Endothelial cell of umbilical vein (primary cell): ENCODE measurements at regions of chr14 and their contacts with region 1.

Region 1: GRCh38 chr14:92846162-92846897 is 52.2 kb downstream of the GOLGA5 start:
- DNase-seq: peak; percentile 73
- H3K4me3 ChIP-seq: no peak overlapping the region
- H3K27ac ChIP-seq: no peak overlapping the region
- H3K4me1 ChIP-seq: peaks cover 19% of the 10 kb centered on the region
- H3K27me3 ChIP-seq: no peaks in the 10 kb centered on the region
- CTCF ChIP-seq: no peak
- POLR2A ChIP-seq: no peak

Region 2: DNA sequence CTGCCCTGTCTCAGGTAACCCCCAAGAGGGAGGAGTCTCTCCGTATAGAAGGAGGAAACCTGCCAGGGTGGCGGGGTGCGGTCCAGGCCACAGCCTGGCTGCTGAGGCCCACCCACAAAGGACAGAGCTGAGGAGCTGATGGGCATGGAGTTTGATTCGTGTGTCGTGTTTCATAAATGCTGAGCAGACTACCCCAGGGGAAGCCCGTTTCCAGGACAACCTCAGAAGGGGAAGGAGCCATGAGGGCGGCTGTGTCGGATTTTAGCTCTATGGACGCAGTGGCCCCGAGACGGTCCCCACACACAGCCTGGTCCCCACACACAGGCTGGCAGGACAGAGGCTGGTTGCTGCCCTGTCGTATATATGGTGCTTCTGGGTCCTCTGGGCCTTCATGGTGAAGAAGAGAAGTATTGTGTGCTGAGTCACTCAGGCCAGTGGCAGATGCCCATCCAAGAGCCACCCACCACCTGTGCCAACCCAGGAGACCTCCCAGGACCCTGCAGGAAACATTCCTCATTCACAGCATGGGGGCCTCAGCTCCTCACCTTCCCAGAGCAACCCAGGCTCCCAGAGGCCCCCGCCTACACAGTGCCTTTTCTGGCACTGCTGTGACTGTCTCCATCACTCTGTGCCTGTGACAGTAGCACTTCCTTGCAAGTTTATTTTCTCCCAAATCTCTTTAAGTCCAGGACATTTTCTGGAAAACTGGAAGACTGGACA is 395.8 kb before region 1 on chr14:
- CTCF ChIA-PET with region 1: no interaction called
- POLR2A ChIA-PET with region 1: no interaction called
- dilution Hi-C with region 1: no loop called
- intact Hi-C with region 1: no loop called
- DNase-seq: no peak
- H3K4me3 ChIP-seq: no peak overlapping the region
- H3K27ac ChIP-seq: no peak overlapping the region
- H3K4me1 ChIP-seq: no peaks in the 10 kb centered on the region
- H3K27me3 ChIP-seq: no peaks in the 10 kb centered on the region
- CTCF ChIP-seq: no peak
- POLR2A ChIP-seq: no peak

Region 3: GRCh38 chr14:92866181-92866752 is 19.9 kb after region 1 on chr14:
- CTCF ChIA-PET with region 1: interaction called, 7 read pairs
- POLR2A ChIA-PET with region 1: no interaction called
- dilution Hi-C with region 1: no loop called
- intact Hi-C with region 1: loop called (anchors 1 kb)
- DNase-seq: peak; percentile 96
- H3K4me3 ChIP-seq: no peak overlapping the region
- H3K27ac ChIP-seq: no peak overlapping the region
- H3K4me1 ChIP-seq: no peaks in the 10 kb centered on the region
- H3K27me3 ChIP-seq: no peaks in the 10 kb centered on the region
- CTCF ChIP-seq: no peak
- POLR2A ChIP-seq: no peak

Region 4: DNA sequence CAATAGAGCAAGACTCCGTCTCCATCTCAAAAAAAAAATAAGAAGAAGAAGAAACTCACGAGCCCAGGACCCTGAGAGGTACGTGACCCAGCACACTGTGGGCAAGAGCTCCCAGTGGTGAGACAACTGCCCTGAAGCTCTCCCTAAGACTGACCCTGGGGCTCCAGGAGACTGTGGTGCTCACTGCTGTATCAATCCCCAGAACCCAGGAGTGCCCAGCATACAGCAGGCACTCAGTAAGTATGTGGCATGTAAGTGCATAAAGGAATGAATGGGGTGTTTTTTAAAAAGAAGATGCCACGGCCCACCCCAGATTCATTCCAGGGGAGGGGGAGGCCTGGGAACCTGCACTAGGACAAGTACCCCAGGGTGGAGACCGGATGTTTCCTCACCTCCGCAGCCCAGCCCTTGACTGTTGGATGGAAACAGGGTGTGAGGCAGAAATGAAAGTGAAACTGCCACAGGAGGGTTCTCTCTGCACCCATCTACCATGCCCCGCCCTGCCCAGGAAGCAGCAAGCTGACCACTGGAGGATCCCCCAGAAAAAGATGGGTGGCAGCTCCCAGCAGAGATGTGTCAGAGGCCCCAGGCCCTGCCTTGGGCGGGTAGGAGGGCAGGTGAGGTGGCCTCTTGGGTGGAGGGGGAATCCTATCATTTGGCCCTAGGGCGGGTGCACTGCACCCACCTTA is 257.2 kb after region 1 on chr14:
- CTCF ChIA-PET with region 1: no interaction called
- POLR2A ChIA-PET with region 1: no interaction called
- dilution Hi-C with region 1: no loop called
- intact Hi-C with region 1: no loop called
- DNase-seq: no peak
- H3K4me3 ChIP-seq: no peak overlapping the region
- H3K27ac ChIP-seq: no peak overlapping the region
- H3K4me1 ChIP-seq: no peaks in the 10 kb centered on the region
- H3K27me3 ChIP-seq: no peaks in the 10 kb centered on the region
- CTCF ChIP-seq: no peak
- POLR2A ChIP-seq: no peak